Mammary epithelial cell (primary cell): ENCODE measurements at regions of chr7 and their contacts with region 1.

Region 1: GRCh38 chr7:139995017-139995931 is 67.5 kb downstream of the PARP12 start:
- DNase-seq: no peak
- H3K4me3 ChIP-seq: no peak overlapping the region
- H3K27ac ChIP-seq: no peak overlapping the region
- H3K4me1 ChIP-seq: no peaks in the 10 kb centered on the region
- H3K27me3 ChIP-seq: no peaks in the 10 kb centered on the region
- CTCF ChIP-seq: peak in 1 of 2 donors; percentile 21

Region 2: DNA sequence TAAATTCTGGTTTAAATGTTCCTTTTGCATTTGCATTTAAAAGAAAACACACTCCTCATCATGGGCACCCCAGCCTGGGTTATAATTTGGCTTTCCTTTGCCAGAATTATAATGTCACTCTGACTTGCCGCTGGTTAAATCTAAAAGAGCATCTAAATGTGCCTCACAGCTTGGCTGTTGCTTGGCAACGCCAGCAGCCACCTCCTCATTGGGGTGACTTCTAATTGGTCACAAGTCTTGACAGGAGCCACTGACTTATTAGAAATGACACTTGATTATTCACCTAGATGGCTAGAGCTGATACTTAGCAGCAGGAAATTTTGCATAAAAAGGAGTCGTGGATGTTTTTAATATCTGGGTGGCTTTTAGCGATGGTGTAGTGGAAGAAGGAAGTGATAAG is 51.9 kb before region 1 on chr7:
- CTCF ChIA-PET with region 1: no interaction called
- dilution Hi-C with region 1: loop called (anchors 5 kb)
- in situ Hi-C with region 1: no loop called
- intact Hi-C with region 1: no loop called
- DNase-seq: no peak
- H3K4me3 ChIP-seq: no peak overlapping the region
- H3K27ac ChIP-seq: no peak overlapping the region
- H3K4me1 ChIP-seq: no peaks in the 10 kb centered on the region
- H3K27me3 ChIP-seq: peaks cover 5% of the 10 kb centered on the region
- CTCF ChIP-seq: no peak